Activated CD8-positive, alpha-beta T cell treated with anti-CD3 and anti-CD28 coated beads, Interleukin-2, amount 10 ng/mL, durations not matched to agents 7 days and 5 days (primary cell): ENCODE measurements at regions of chr19 and their contacts with region 1.

Region 1: GRCh38 chr19:18281082-18282020 is at the start of gene JUND:
- DNase-seq: peak; percentile 98
- ATAC-seq: peak; percentile 69
- H3K4me3 Mint-ChIP-seq: peak within 1 kb of the TSS; percentile 96
- H3K27ac Mint-ChIP-seq: peak within 1 kb of the TSS; percentile 96
- H3K4me1 Mint-ChIP-seq: peaks cover 54% of the 10 kb centered on the region
- H3K27me3 Mint-ChIP-seq: no peaks in the 10 kb centered on the region
- total RNA-seq, gene JUND: 462 to 469 TPM

Region 2: GRCh38 chr19:18203863-18204393 is 77.4 kb before region 1 on chr19 and contains the start of gene RAB3A:
- CTCF ChIA-PET with region 1: interaction called, 12 read pairs
- POLR2A ChIA-PET with region 1: interaction called, 8 read pairs
- DNase-seq: peak; percentile 100
- ATAC-seq: peak; percentile 95
- H3K4me3 Mint-ChIP-seq: peak within 1 kb of the TSS; percentile 95
- H3K27ac Mint-ChIP-seq: peak within 1 kb of the TSS; percentile 91
- H3K4me1 Mint-ChIP-seq: peaks cover 28% of the 10 kb centered on the region
- H3K27me3 Mint-ChIP-seq: peaks cover 3% of the 10 kb centered on the region
- total RNA-seq, gene RAB3A: 5.6 to 6.2 TPM

Region 3: DNA sequence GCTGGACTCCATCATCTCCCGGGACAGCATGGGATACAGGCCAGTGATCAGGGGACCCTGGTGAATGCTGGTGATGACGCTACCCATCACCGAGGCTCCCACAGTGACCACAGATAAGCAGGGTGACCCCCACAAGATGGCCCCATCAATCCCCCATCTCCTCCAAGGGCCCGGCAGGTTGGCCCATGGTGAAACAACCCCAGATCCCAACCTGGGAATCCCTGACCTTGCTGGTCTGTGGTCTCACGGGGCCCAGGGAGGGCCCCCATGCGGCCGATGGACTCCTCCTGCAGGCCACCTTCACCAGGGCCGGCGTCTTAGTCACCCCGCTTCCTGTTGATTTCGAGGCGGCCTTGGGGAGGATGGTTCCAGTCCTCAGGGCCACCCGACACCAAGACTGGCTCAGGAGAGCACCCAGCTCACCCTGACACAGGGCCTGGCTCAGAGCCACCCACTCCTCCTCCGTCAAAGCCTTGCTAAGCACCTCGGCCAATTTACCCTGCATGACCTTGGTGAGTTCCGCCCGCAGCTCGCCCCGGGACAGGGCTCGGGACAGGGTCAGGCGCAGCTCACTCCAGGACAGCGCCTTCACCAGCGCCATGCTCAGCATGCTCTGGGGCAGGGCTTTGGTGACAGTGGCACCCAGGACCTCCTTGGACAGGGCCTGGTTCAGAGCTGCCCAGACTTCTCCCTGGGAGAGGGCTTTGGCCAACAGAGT is 17.1 kb before region 1 on chr19:
- CTCF ChIA-PET with region 1: interaction called, 25 read pairs
- POLR2A ChIA-PET with region 1: interaction called, 5 read pairs
- DNase-seq: no peak
- ATAC-seq: no peak
- H3K4me3 Mint-ChIP-seq: no peak overlapping the region
- H3K27ac Mint-ChIP-seq: no peak overlapping the region
- H3K4me1 Mint-ChIP-seq: peaks cover 11% of the 10 kb centered on the region
- H3K27me3 Mint-ChIP-seq: no peaks in the 10 kb centered on the region

Region 4: DNA sequence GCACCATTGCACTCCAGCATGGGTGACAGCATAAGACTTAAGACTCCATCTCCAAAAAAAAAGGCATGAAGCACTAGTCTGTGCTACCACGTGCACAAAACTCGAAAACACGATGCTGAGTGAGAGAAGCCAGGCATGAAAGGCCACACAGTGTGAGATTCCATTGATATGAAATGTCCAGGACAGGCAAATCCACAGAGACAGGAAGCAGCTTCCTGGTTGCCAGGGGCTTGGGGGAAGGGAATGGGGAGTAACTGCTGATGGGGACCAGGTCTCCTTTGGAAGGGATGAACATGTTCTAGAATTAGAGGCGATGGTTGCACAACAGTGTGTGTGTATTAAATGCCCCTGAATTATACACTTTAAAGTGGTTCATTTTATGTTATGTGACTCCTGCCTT is 16.0 kb after region 1 on chr19:
- CTCF ChIA-PET with region 1: interaction called, 255 read pairs
- POLR2A ChIA-PET with region 1: interaction called, 520 read pairs
- DNase-seq: no peak
- ATAC-seq: no peak
- H3K4me3 Mint-ChIP-seq: no peak overlapping the region
- H3K27ac Mint-ChIP-seq: peak overlapping the region; percentile 65
- H3K4me1 Mint-ChIP-seq: peaks cover 54% of the 10 kb centered on the region
- H3K27me3 Mint-ChIP-seq: no peaks in the 10 kb centered on the region

Region 5: GRCh38 chr19:18322759-18323460 is 41.6 kb after region 1 on chr19 and contains the start of gene LSM4:
- CTCF ChIA-PET with region 1: interaction called, 464 read pairs
- POLR2A ChIA-PET with region 1: interaction called, 647 read pairs
- DNase-seq: peak; percentile 100
- ATAC-seq: peak; percentile 95
- H3K4me3 Mint-ChIP-seq: peak within 1 kb of the TSS; percentile 92
- H3K27ac Mint-ChIP-seq: peak within 1 kb of the TSS; percentile 93
- H3K4me1 Mint-ChIP-seq: peaks cover 56% of the 10 kb centered on the region
- H3K27me3 Mint-ChIP-seq: no peaks in the 10 kb centered on the region
- total RNA-seq, gene LSM4: 199 to 215 TPM

Region 6: GRCh38 chr19:18340190-18340989 is 59.0 kb after region 1 on chr19 and contains the start of gene PGPEP1:
- CTCF ChIA-PET with region 1: interaction called, 63 read pairs
- POLR2A ChIA-PET with region 1: interaction called, 9 read pairs
- DNase-seq: peak; percentile 55
- ATAC-seq: peak; percentile 63
- H3K4me3 Mint-ChIP-seq: peak within 1 kb of the TSS; percentile 77
- H3K27ac Mint-ChIP-seq: peak within 1 kb of the TSS; percentile 81
- H3K4me1 Mint-ChIP-seq: peaks cover 21% of the 10 kb centered on the region
- H3K27me3 Mint-ChIP-seq: peaks cover 4% of the 10 kb centered on the region
- total RNA-seq, gene PGPEP1: 30.1 to 34.5 TPM

Region 7: GRCh38 chr19:18419195-18419698 is 137.9 kb after region 1 on chr19 and contains the start of gene SSBP4:
- CTCF ChIA-PET with region 1: interaction called, 110 read pairs
- POLR2A ChIA-PET with region 1: interaction called, 61 read pairs
- DNase-seq: peak; percentile 76
- ATAC-seq: peak; percentile 42
- H3K4me3 Mint-ChIP-seq: peak within 1 kb of the TSS; percentile 93
- H3K27ac Mint-ChIP-seq: peak within 1 kb of the TSS; percentile 94
- H3K4me1 Mint-ChIP-seq: peaks cover 83% of the 10 kb centered on the region
- H3K27me3 Mint-ChIP-seq: no peaks in the 10 kb centered on the region
- total RNA-seq, gene SSBP4: 198 to 204 TPM

Region 8: DNA sequence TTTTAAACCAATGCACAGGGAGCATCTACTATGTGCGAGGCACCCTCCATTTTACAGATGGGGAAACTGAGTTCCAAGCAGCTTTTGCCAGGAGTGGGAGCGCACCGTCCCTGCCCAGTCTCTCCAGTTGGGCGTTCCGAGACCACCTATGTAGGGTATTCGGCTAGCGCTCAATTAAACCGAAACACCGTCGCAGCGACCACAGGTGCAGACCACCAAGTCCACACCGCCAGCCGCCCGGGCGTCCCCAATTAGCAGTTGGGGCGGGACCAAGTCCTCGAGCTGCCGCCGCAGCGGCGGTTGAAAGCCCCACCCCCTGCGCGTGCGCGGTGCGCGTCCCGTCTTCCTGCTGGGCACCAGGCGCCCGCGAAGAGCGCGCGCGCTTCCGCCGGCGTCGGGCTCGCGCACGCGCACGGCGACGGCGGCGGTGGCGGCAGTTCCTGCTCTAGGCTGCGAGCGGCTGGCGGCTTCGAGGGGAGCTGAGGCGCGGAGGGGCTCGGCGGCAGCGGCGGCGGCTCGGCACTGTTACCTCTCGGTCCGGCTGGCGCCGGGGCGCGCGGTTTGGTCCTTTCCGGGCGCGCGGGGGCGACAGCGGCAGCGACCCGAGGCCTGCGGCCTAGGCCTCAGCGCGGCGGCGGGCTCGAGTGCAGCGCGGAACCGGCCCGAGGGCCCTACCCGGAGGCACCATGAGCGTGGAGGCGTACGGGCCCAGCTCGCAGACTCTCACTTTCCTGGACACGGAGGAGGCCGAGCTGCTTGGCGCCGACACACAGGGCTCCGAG is 550.4 kb after region 1 on chr19 and contains the start of gene UPF1:
- CTCF ChIA-PET with region 1: no interaction called
- POLR2A ChIA-PET with region 1: no interaction called
- DNase-seq: peak; percentile 97
- ATAC-seq: peak; percentile 89
- H3K4me3 Mint-ChIP-seq: peak within 1 kb of the TSS; percentile 96
- H3K27ac Mint-ChIP-seq: peak within 1 kb of the TSS; percentile 89
- H3K4me1 Mint-ChIP-seq: peaks cover 39% of the 10 kb centered on the region
- H3K27me3 Mint-ChIP-seq: peaks cover 6% of the 10 kb centered on the region
- total RNA-seq, gene UPF1: 81.8 to 84.0 TPM